Caco-2 (cell line): ENCODE measurements at regions of chr13 and their contacts with region 1.

Region 1: GRCh38 chr13:101144808-101145419 is 271.4 kb downstream of the NALCN start:
- DNase-seq: peak in 1 of 2 experiments; percentile 47
- H3K4me3 ChIP-seq: no peak overlapping the region
- H3K4me3 Mint-ChIP-seq: no peak overlapping the region
- H3K27ac Mint-ChIP-seq: no peak overlapping the region
- H3K4me1 ChIP-seq: no peaks in the 10 kb centered on the region
- H3K4me1 Mint-ChIP-seq: no peaks in the 10 kb centered on the region
- H3K27me3 ChIP-seq: peaks cover 2% of the 10 kb centered on the region; the same call in 1 of the 2 replicates
- H3K27me3 Mint-ChIP-seq: peaks cover 29% of the 10 kb centered on the region
- CTCF ChIP-seq: peak; percentile 53 to 63

Region 2: DNA sequence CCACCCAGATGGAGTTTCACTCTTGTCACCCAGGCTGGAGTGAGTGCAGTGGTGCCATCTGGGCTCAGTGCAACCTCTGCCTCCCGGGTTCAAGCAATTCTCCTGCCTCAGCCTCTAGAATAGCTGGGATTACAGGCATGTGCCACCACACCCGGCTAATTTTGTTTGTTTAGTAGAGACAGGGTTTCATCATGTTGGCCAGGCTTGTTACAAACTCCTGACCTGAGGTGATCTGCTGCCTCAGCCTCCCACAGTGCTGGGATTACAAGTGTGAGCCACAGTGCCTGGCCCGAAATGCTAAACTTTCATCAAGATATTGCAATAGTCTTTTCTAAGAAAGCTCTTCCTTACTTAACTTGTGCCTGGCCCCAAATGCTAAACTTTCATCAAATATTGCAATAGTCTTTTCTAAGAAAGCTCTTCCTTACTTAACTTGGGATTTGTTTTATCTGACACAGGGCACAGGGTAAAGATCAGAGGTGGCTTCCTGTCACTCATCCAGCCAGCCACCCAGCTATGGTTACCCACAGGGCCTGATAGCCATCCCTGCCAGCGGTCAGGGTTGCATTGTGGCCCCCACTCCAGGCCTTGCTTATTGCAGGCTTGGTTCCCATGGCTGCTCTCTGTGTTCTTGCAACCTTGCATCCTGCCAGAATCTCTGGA is 118.0 kb before region 1 on chr13:
- CTCF ChIA-PET with region 1: no interaction called
- POLR2A ChIA-PET with region 1: no interaction called
- intact Hi-C with region 1: no loop called
- DNase-seq: no peak
- H3K4me3 ChIP-seq: no peak overlapping the region
- H3K4me3 Mint-ChIP-seq: no peak overlapping the region
- H3K27ac Mint-ChIP-seq: no peak overlapping the region
- H3K4me1 ChIP-seq: no peaks in the 10 kb centered on the region
- H3K4me1 Mint-ChIP-seq: no peaks in the 10 kb centered on the region
- H3K27me3 ChIP-seq: no peaks in the 10 kb centered on the region
- H3K27me3 Mint-ChIP-seq: peaks cover 10% of the 10 kb centered on the region
- CTCF ChIP-seq: no peak

Region 3: GRCh38 chr13:101120007-101120406 is 24.9 kb before region 1 on chr13:
- CTCF ChIA-PET with region 1: no interaction called
- POLR2A ChIA-PET with region 1: no interaction called
- intact Hi-C with region 1: no loop called
- DNase-seq: no peak
- H3K4me3 ChIP-seq: no peak overlapping the region
- H3K4me3 Mint-ChIP-seq: no peak overlapping the region
- H3K27ac Mint-ChIP-seq: no peak overlapping the region
- H3K4me1 ChIP-seq: no peaks in the 10 kb centered on the region
- H3K4me1 Mint-ChIP-seq: no peaks in the 10 kb centered on the region
- H3K27me3 ChIP-seq: no peaks in the 10 kb centered on the region
- H3K27me3 Mint-ChIP-seq: peaks cover 16% of the 10 kb centered on the region
- CTCF ChIP-seq: no peak

Region 4: GRCh38 chr13:101202590-101202989 is 57.7 kb after region 1 on chr13:
- CTCF ChIA-PET with region 1: interaction called, 23 read pairs
- POLR2A ChIA-PET with region 1: no interaction called
- intact Hi-C with region 1: loop called (anchors 1 kb)
- DNase-seq: peak in 1 of 2 experiments; percentile 28
- H3K4me3 ChIP-seq: no peak overlapping the region
- H3K4me3 Mint-ChIP-seq: no peak overlapping the region
- H3K27ac Mint-ChIP-seq: no peak overlapping the region
- H3K4me1 ChIP-seq: no peaks in the 10 kb centered on the region
- H3K4me1 Mint-ChIP-seq: no peaks in the 10 kb centered on the region
- H3K27me3 ChIP-seq: no peaks in the 10 kb centered on the region
- H3K27me3 Mint-ChIP-seq: peaks cover 2% of the 10 kb centered on the region
- CTCF ChIP-seq: peak in 1 of 2 experiments; percentile 32

Region 5: DNA sequence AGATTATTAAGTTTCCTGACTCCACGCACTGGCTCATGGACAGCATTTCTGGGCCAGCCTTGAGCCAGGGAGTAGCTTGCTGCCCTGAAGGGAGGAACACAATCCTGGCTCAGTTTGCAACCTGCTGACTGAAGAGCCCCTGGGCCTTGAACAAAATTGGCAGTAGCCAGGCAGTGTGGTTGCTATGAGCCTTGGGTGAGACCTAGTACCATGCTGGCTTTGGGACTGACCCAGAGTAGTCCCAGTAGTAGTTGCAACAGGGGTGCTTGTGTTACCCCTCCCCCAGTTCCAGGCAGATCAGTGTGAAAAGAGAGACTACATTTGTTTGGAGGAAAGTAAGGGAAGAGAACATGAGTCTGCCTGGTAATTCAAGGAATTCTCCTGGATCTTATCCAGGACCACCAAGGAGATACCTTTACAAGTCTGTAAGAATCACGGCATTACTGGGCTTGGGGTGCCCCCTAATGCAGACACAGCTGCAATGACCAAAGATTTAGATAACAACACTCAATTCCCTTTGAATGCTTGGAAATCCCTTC is 329.6 kb after region 1 on chr13:
- CTCF ChIA-PET with region 1: no interaction called
- POLR2A ChIA-PET with region 1: no interaction called
- intact Hi-C with region 1: loop called (anchors 2 kb)
- DNase-seq: no peak
- H3K4me3 ChIP-seq: no peak overlapping the region
- H3K4me3 Mint-ChIP-seq: no peak overlapping the region
- H3K27ac Mint-ChIP-seq: no peak overlapping the region
- H3K4me1 ChIP-seq: no peaks in the 10 kb centered on the region
- H3K4me1 Mint-ChIP-seq: no peaks in the 10 kb centered on the region
- H3K27me3 ChIP-seq: no peaks in the 10 kb centered on the region
- H3K27me3 Mint-ChIP-seq: peaks cover 5% of the 10 kb centered on the region
- CTCF ChIP-seq: no peak

Region 6: DNA sequence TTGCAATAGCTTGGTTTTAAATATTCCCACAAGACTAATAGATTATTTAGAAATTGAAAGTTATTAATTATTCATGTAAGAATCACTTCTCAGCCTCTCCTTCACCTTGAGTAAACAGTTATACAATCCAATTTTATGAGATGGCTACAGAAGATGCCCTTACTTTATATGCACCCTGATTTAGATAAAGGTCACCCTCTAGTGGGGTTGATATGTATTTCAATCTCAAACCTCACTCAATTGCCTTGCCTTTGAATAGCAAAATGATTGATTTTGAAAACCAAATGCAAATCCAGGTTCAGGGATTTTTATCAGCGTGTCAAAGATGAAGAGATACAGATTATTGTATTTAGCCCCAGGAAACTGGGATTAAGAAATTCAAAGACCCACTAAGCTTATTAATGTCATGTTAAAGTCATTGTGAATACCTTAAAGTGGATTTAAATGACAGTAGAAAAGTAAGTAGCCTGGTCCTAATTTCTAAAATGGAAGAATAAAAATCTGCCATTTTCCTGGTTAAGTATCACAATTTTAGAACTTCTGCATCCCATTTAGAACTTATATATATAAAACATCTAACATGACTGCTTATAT is 612.6 kb after region 1 on chr13:
- CTCF ChIA-PET with region 1: no interaction called
- POLR2A ChIA-PET with region 1: no interaction called
- intact Hi-C with region 1: loop called (anchors 2 kb)
- DNase-seq: no peak
- H3K4me3 ChIP-seq: no peak overlapping the region
- H3K4me3 Mint-ChIP-seq: no peak overlapping the region
- H3K27ac Mint-ChIP-seq: no peak overlapping the region
- H3K4me1 ChIP-seq: no peaks in the 10 kb centered on the region
- H3K4me1 Mint-ChIP-seq: no peaks in the 10 kb centered on the region
- H3K27me3 ChIP-seq: no peaks in the 10 kb centered on the region
- H3K27me3 Mint-ChIP-seq: peaks cover 3% of the 10 kb centered on the region
- CTCF ChIP-seq: peak; percentile 16 to 41

Region 7: DNA sequence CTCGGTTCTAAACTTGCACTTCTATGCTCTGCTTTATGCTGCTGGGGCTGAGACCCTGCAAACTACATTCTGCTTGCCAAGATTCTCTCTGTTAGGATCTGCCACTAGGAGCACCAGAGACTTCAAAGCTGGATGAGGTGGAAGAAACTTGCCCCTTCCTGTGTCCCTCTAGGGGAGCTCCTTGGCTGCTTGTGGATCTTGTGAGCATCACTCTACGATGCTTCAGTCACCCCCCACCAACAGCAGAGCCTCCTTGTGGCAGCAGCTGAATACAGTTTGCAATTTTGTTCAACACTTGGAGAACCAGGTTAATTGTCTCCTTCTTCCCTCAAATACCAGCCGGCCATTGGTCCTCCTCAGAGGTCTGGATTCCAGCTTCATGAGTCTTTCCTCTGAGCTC is 946.3 kb after region 1 on chr13:
- CTCF ChIA-PET with region 1: no interaction called
- POLR2A ChIA-PET with region 1: no interaction called
- intact Hi-C with region 1: loop called (anchors 2 kb)
- DNase-seq: peak; percentile 50 to 51
- H3K4me3 ChIP-seq: no peak overlapping the region
- H3K4me3 Mint-ChIP-seq: no peak overlapping the region
- H3K27ac Mint-ChIP-seq: no peak overlapping the region
- H3K4me1 ChIP-seq: no peaks in the 10 kb centered on the region
- H3K4me1 Mint-ChIP-seq: no peaks in the 10 kb centered on the region
- H3K27me3 ChIP-seq: no peaks in the 10 kb centered on the region; the same call in 1 of the 2 replicates
- H3K27me3 Mint-ChIP-seq: peaks cover 12% of the 10 kb centered on the region
- CTCF ChIP-seq: peak; percentile 28 to 41